Activated T-helper 1 cell treated with anti-CD3 and anti-CD28 coated beads, Interleukin-12 subunit alpha, Interleukin-12 subunit beta, Interleukin-2, Interleukin-4 antibody, amounts not matched to agents 30 ng/mL and 10 ng/mL and 1 ng/mL, durations not matched to agents 14 hours and 24 hours and 36 hours (primary cell): ENCODE measurements at regions of chr5 and their contacts with region 1.

Region 1: GRCh38 chr5:159286420-159287035 is 23.4 kb downstream of the UBLCP1 start:
- DNase-seq: no peak
- H3K4me3 Mint-ChIP-seq: no peak overlapping the region
- H3K27ac Mint-ChIP-seq: no peak overlapping the region
- H3K4me1 Mint-ChIP-seq: no peaks in the 10 kb centered on the region
- H3K27me3 Mint-ChIP-seq: peaks cover under 1% of the 10 kb centered on the region

Region 2: GRCh38 chr5:159353661-159354252 is 67.2 kb after region 1 on chr5:
- intact Hi-C with region 1: no loop called
- DNase-seq: no peak
- H3K4me3 Mint-ChIP-seq: no peak overlapping the region
- H3K27ac Mint-ChIP-seq: no peak overlapping the region
- H3K4me1 Mint-ChIP-seq: peaks cover 15% of the 10 kb centered on the region
- H3K27me3 Mint-ChIP-seq: peaks cover 45% of the 10 kb centered on the region

Region 3: GRCh38 chr5:159515909-159516415 is 229.4 kb after region 1 on chr5:
- intact Hi-C with region 1: loop called (anchors 5 kb)
- DNase-seq: peak; percentile 53
- H3K4me3 Mint-ChIP-seq: no peak overlapping the region
- H3K27ac Mint-ChIP-seq: peak overlapping the region; percentile 41
- H3K4me1 Mint-ChIP-seq: peaks cover 12% of the 10 kb centered on the region
- H3K27me3 Mint-ChIP-seq: peaks cover 35% of the 10 kb centered on the region

Region 4: DNA sequence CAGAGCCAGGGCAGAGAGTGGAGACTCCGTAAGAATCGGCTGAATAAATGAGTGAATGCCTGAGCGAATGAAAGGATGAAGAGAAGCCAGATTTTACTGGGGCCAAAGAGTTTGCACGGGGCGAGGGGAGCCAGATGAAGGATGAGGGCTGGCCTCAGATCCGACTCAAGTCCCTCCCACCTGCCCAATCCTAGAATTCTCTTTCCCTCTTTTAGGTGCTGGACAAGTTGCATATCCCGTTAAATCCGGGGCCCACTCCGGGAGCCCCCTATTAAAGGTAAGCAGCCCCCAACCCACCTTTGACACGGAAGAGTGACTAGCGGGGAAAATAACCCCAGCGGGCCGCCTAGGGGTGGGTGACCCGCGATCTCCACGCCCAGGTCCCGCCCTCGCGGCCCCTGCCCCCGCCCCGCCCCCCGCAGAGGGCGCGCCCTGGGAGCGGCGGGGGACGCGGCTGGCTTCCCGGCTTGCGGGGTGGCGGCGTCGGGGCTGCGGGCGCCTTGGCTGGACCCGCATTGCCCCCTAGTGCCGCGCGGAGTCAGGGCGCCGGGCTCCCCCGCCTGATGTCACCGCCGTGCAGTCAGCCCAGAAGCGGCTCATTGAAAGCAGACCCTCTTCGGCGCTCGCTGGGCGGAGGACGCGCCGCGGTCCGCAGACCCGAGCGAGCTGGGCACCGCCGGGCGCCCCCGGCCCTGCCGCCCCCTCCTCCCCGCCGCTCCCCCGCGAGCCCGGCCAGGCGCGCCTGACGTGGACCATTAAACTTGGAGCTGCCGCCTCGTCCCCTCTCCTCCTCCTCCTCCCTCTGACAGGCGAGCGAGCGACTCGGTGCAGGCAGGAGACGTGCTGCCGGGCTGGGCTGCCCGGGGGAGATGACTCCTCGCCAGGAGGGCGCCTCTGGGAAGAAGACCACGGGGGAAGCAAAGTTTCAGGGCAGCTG is 629.6 kb after region 1 on chr5 and contains the start of gene ADRA1B:
- intact Hi-C with region 1: loop called (anchors 5 kb)
- DNase-seq: peak; percentile 9
- H3K4me3 Mint-ChIP-seq: peak within 1 kb of the TSS; percentile 66
- H3K27ac Mint-ChIP-seq: no peak within 1 kb of the TSS
- H3K4me1 Mint-ChIP-seq: peaks cover 11% of the 10 kb centered on the region
- H3K27me3 Mint-ChIP-seq: peaks cover 45% of the 10 kb centered on the region
- total RNA-seq, gene ADRA1B: not detected in 2 replicates

Region 5: GRCh38 chr5:159965031-159965837 is 678.7 kb after region 1 on chr5:
- intact Hi-C with region 1: loop called (anchors 5 kb)
- DNase-seq: no peak
- H3K4me3 Mint-ChIP-seq: no peak overlapping the region
- H3K27ac Mint-ChIP-seq: no peak overlapping the region
- H3K4me1 Mint-ChIP-seq: no peaks in the 10 kb centered on the region
- H3K27me3 Mint-ChIP-seq: peaks cover 29% of the 10 kb centered on the region

Region 6: GRCh38 chr5:159987031-159987674 is 700.6 kb after region 1 on chr5:
- intact Hi-C with region 1: loop called (anchors 1 kb)
- DNase-seq: peak; percentile 60
- H3K4me3 Mint-ChIP-seq: peak overlapping the region; percentile 53
- H3K27ac Mint-ChIP-seq: no peak overlapping the region
- H3K4me1 Mint-ChIP-seq: peaks cover 10% of the 10 kb centered on the region
- H3K27me3 Mint-ChIP-seq: peaks cover 68% of the 10 kb centered on the region